CD8-positive, alpha-beta T cell (primary cell): ENCODE measurements at regions of chr5 and their contacts with region 1.

Region 1: GRCh38 chr5:148740966-148741742 is 85.3 kb upstream of the ADRB2 start:
- DNase-seq: peak in 2 of 9 experiments; percentile 66 to 73
- ATAC-seq: peak; percentile 59
- H3K4me3 ChIP-seq: no peak overlapping the region
- H3K4me3 Mint-ChIP-seq: no peak overlapping the region
- H3K27ac ChIP-seq: no peak overlapping the region
- H3K27ac Mint-ChIP-seq: no peak overlapping the region
- H3K4me1 ChIP-seq: no peaks in the 10 kb centered on the region
- H3K4me1 Mint-ChIP-seq: no peaks in the 10 kb centered on the region
- H3K27me3 ChIP-seq: no peaks in the 10 kb centered on the region
- H3K27me3 Mint-ChIP-seq: peaks cover 25% of the 10 kb centered on the region
- CTCF ChIP-seq: peak; percentile 81

Region 2: GRCh38 chr5:148769941-148770340 is 28.8 kb after region 1 on chr5:
- CTCF ChIA-PET with region 1: interaction called, 11 read pairs
- POLR2A ChIA-PET with region 1: no interaction called
- intact Hi-C with region 1: no loop called
- DNase-seq: no peak
- ATAC-seq: no peak
- H3K4me3 ChIP-seq: no peak overlapping the region
- H3K4me3 Mint-ChIP-seq: no peak overlapping the region
- H3K27ac ChIP-seq: no peak overlapping the region
- H3K27ac Mint-ChIP-seq: no peak overlapping the region
- H3K4me1 ChIP-seq: no peaks in the 10 kb centered on the region
- H3K4me1 Mint-ChIP-seq: no peaks in the 10 kb centered on the region
- H3K27me3 ChIP-seq: peaks cover 0 to 2% of the 10 kb centered on the region in 2 experiments
- H3K27me3 Mint-ChIP-seq: peaks cover 19% of the 10 kb centered on the region
- CTCF ChIP-seq: no peak

Region 3: DNA sequence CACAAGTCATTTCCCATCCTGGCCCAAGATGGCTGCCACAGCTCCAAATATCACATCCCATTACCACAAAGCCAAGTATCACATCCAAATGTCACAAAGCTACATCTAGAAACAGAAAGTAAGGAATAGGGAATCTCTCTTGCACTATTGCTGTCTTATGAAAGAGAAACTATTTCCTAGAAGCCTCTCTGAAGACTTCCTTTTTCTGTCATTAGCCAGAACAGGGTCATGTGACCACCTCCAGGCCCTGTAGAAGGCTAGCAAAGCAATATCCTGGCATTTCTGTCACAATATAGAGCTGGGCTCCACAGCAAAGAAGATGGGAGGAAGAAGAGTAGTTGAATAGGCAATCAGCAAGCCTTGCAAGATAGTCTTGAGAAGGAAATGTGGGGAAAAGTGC is 222.5 kb after region 1 on chr5:
- CTCF ChIA-PET with region 1: interaction called, 92 read pairs
- POLR2A ChIA-PET with region 1: no interaction called
- intact Hi-C with region 1: no loop called
- DNase-seq: no peak
- ATAC-seq: no peak
- H3K4me3 ChIP-seq: no peak overlapping the region
- H3K4me3 Mint-ChIP-seq: no peak overlapping the region
- H3K27ac ChIP-seq: no peak overlapping the region
- H3K27ac Mint-ChIP-seq: no peak overlapping the region
- H3K4me1 ChIP-seq: no peaks in the 10 kb centered on the region
- H3K4me1 Mint-ChIP-seq: peaks cover 1% of the 10 kb centered on the region
- H3K27me3 ChIP-seq: no peaks in the 10 kb centered on the region
- H3K27me3 Mint-ChIP-seq: peaks cover 3% of the 10 kb centered on the region
- CTCF ChIP-seq: no peak

Region 4: DNA sequence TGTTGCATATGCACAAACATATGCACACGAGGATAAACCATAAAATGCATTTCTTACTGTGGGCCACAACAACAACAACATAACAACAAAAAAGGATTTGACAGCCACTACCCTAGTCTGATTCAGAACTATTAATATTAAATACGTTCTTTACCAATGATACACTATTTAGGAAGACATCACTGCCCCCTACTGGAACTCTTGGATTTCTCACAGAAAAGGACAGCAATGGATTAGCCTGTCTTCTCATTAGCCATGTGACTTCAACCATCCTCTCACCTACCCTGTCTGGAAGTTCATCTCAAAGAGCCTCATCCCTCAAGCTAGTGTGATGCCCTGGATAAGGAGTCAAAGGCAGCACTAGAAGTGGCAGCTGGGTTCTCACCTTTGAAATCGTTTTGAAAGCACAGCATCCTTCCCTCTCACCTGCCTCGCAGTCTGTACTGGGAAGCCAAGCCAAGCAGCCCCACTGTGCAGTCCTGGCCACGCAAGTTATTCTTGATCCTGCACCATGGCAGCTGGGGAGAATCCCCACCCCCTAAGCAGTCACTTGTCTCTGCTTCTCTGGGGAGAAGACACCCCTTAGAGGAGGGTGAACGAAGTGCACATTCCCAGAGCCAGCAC is 257.1 kb after region 1 on chr5:
- CTCF ChIA-PET with region 1: interaction called, 26 read pairs
- POLR2A ChIA-PET with region 1: no interaction called
- intact Hi-C with region 1: loop called in 1 of 2 experiments (anchors 1 kb)
- DNase-seq: peak in 4 of 9 experiments; percentile 13 to 74 (median 52)
- ATAC-seq: peak; percentile 62
- H3K4me3 ChIP-seq: no peak overlapping the region
- H3K4me3 Mint-ChIP-seq: no peak overlapping the region
- H3K27ac ChIP-seq: no peak overlapping the region
- H3K27ac Mint-ChIP-seq: no peak overlapping the region
- H3K4me1 ChIP-seq: no peaks in the 10 kb centered on the region
- H3K4me1 Mint-ChIP-seq: peaks cover 2% of the 10 kb centered on the region
- H3K27me3 ChIP-seq: no peaks in the 10 kb centered on the region
- H3K27me3 Mint-ChIP-seq: peaks cover 23% of the 10 kb centered on the region
- CTCF ChIP-seq: peak; percentile 50

Region 5: GRCh38 chr5:149114403-149115312 is 373.5 kb after region 1 on chr5:
- CTCF ChIA-PET with region 1: interaction called, 11 read pairs
- POLR2A ChIA-PET with region 1: no interaction called
- intact Hi-C with region 1: loop called in 1 of 2 experiments (anchors 2 kb)
- DNase-seq: peak in 8 of 9 experiments; percentile 8 to 58 (median 38)
- ATAC-seq: no peak
- H3K4me3 ChIP-seq: no peak overlapping the region
- H3K4me3 Mint-ChIP-seq: no peak overlapping the region
- H3K27ac ChIP-seq: no peak overlapping the region
- H3K27ac Mint-ChIP-seq: no peak overlapping the region
- H3K4me1 ChIP-seq: no peaks in the 10 kb centered on the region
- H3K4me1 Mint-ChIP-seq: no peaks in the 10 kb centered on the region
- H3K27me3 ChIP-seq: peaks cover 0 to 9% of the 10 kb centered on the region in 2 experiments
- H3K27me3 Mint-ChIP-seq: peaks cover 20% of the 10 kb centered on the region
- CTCF ChIP-seq: no peak